Activated CD4-positive, alpha-beta memory T cell treated with anti-CD3 and anti-CD28 coated beads, Interleukin-2, amount 10 ng/mL, durations not matched to agents 7 days and 5 days (primary cell): ENCODE measurements at regions of chr10 and their contacts with region 1.

Region 1: DNA sequence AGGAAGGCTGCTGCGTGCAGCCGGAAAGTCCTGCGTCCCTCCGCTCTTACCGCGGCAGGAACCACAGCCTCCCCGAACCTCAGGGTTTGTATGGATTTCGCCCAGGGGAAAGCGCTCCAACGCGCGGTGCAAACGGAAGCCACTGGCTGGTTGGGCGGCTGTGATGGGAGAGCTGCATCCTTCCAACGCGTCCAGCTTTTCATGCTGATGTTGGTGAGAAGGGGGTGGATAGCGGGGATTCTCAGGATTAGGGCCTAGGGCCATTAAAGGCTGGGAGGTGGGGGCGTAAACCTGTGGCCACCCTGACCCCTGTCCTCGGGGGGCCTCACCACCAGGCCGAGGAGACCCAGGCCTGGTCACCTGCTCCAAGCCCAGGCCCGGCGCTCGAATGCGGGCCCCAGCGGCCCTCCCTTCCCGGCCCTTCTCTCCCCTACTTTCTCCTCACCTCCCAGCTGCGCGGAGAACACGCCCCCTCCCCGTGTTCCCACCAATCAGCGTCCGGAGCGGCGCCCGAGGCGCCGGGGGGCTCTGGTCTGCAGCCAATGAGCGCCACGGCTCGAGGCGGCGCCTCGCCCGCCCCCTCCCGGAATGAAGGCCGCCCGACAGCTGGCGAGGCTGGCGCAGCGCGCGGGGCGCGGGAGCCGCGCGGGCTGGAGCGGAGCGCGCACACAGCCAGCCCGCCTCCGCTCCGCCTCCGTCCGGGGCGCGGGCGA is 458 bp upstream of the NANOS1 start:
- DNase-seq: peak; percentile 83
- H3K4me3 Mint-ChIP-seq: peak overlapping the region; percentile 61
- H3K27ac Mint-ChIP-seq: no peak overlapping the region
- H3K4me1 Mint-ChIP-seq: peaks cover 20% of the 10 kb centered on the region
- H3K27me3 Mint-ChIP-seq: peaks cover 7% of the 10 kb centered on the region

Region 2: GRCh38 chr10:118892255-118892654 is 136.8 kb before region 1 on chr10:
- CTCF ChIA-PET with region 1: no interaction called
- POLR2A ChIA-PET with region 1: no interaction called
- DNase-seq: no peak
- H3K4me3 Mint-ChIP-seq: no peak overlapping the region
- H3K27ac Mint-ChIP-seq: no peak overlapping the region
- H3K4me1 Mint-ChIP-seq: no peaks in the 10 kb centered on the region
- H3K27me3 Mint-ChIP-seq: peaks cover 6% of the 10 kb centered on the region

Region 3: GRCh38 chr10:119049361-119049760 is 20.3 kb after region 1 on chr10:
- CTCF ChIA-PET with region 1: interaction called, 3 read pairs
- POLR2A ChIA-PET with region 1: interaction called, 16 read pairs
- DNase-seq: no peak
- H3K4me3 Mint-ChIP-seq: no peak overlapping the region
- H3K27ac Mint-ChIP-seq: no peak overlapping the region
- H3K4me1 Mint-ChIP-seq: peaks cover 18% of the 10 kb centered on the region
- H3K27me3 Mint-ChIP-seq: no peaks in the 10 kb centered on the region